ENCODE measurements at regions of chr7 and their contacts with region 1.

Region 1: DNA sequence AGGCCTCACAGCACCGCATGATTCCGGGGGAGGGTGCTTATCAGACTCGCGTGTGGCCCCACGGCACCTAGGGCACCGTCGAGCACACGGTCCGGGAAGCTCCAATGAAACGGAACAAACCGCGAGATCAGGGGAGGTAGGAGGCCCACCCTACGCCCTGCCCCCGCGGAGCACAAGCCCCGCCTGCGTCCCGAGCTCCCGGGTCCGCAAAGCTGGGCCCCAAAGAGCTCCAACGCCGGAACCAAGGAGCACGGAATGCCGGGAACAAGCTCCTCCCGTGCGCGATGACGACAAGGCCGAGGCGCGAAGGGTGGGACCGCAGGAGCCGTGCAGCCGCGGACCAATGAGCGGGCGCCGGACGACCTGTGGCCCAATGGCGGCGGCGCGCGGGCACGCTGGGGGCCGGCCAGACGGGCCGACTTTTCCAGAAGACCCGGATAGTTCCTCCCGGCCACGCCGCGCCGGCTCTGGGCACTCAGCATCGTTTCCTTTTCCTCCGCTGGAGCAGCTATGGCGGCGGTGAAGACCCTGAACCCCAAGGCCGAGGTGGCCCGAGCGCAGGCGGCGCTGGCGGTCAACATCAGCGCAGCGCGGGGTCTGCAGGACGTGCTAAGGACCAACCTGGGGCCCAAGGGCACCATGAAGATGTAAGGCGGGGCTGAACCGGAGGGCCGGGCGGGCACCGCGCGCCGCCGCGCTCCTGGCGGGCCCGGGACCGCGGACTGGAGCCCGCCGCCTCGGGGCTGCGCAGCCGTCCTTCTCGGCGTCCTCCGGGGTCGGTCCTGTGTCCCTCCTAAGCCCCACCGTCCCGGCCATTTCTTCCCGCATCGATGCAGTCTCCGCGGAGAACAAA is at the starts of genes CCT6A and PSPH:
- DNase-seq: peak; percentile 94
- ATAC-seq: peak; percentile 92
- H3K4me3 Mint-ChIP-seq: peak within 1 kb of the TSS; percentile 94
- H3K27ac Mint-ChIP-seq: peak within 1 kb of the TSS; percentile 94
- H3K4me1 Mint-ChIP-seq: peaks cover 46% of the 10 kb centered on the region
- H3K27me3 Mint-ChIP-seq: no peaks in the 10 kb centered on the region
- CTCF ChIP-seq: no peak
- total RNA-seq, gene CCT6A: 231 to 239 TPM
- total RNA-seq, gene PSPH: 31.2 to 33.8 TPM

Region 2: DNA sequence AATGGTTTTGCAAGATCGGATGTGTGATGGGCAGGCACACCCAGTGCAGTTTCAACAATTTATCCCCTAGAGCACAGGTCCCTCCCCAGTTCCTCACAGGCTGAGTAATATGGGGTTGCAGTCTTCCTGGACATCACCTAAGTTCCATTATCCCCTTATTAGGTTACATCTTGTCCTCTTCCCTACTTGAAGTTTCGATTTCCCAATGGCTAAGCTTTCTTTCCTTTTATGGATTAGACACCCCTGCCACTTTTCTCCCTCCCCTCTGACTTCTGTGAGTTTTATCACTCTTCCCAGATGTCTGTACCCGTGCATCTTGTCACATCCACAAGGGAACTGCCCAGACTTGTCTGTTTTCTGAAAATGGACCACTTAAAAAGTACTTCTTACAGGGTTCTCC is 89.6 kb before region 1 on chr7:
- CTCF ChIA-PET with region 1: no interaction called
- POLR2A ChIA-PET with region 1: no interaction called
- intact Hi-C with region 1: no loop called
- DNase-seq: no peak
- ATAC-seq: no peak
- H3K4me3 Mint-ChIP-seq: no peak overlapping the region
- H3K27ac Mint-ChIP-seq: no peak overlapping the region
- H3K4me1 Mint-ChIP-seq: peaks cover 22% of the 10 kb centered on the region
- H3K27me3 Mint-ChIP-seq: no peaks in the 10 kb centered on the region
- CTCF ChIP-seq: no peak

Region 3: DNA sequence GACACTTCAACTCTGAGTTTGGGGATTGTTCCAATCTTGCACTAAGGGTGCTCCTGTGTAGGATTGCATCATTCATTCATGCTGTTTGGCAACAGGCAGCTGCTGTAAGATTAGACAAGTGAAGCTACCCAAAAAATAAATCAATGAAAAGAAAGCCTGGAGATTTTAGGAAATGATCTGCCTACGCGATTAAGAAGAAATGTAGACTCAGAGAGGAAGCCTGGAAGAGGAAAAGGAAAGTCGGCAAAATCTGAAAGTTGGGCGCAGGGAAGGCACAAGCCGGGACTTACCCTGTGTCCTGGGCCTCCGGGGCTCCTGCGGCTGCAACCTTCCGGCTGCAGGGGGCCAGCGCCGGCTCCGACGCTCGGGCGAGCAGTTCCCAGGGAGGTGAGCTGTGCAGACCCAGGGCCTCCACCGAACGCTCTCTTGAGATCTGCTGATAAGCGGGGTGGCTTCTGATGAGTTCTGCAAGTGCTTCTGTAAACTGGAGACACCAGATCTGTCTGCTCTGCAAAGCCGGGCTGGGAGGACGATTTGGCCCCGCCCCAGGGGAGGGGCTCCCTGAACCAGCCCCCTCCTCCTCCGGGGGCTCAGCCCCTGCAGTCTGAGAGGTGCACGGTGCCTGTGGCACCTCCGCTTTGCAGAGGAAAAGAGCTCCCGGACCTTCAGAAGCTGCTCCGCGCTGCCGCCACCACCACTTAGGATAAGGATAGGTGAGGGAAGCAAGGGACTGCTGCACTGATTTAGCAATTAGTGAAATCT is 17.7 kb before region 1 on chr7:
- CTCF ChIA-PET with region 1: no interaction called
- POLR2A ChIA-PET with region 1: interaction called, 12 read pairs
- intact Hi-C with region 1: no loop called
- DNase-seq: peak; percentile 71
- ATAC-seq: peak; percentile 96
- H3K4me3 Mint-ChIP-seq: peak overlapping the region; percentile 79
- H3K27ac Mint-ChIP-seq: peak overlapping the region; percentile 81
- H3K4me1 Mint-ChIP-seq: peaks cover 9% of the 10 kb centered on the region
- H3K27me3 Mint-ChIP-seq: no peaks in the 10 kb centered on the region
- CTCF ChIP-seq: no peak

Region 4: DNA sequence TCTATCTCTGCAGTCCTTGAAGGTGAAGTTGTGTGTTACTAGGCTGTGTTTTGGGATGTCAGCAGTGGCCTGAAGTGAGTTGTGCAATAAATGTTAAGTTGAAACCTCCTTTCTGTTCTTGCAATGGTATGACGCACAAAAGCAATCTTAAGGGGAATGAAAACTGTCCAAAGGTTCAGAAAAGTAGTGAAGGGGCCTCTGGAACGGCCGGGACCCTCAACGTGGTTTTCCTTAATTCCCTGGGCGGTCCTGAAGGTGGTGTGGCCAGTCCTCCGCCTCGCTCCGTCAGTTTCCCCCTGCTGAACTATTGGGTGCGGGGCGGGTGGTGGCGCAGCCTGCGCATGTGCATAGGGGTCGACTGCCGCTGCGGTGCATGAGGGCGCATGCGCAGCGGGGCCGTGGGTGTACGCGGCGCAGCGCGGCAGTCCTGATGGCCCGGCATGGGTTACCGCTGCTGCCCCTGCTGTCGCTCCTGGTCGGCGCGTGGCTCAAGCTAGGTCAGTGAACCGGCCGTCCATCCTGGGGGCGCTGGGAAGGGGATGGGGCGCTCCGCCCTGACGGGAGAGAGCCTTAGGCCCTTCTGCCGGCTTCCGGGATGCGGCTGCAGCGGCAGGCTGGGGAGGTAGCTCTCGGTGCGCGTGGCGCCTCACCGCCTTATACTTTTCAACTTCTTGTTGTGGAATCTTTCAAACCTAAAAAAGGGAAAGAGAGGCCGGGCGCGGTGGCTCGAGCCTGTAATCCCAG is 12.5 kb after region 1 on chr7 and contains the start of gene SUMF2:
- CTCF ChIA-PET with region 1: interaction called, 7 read pairs
- POLR2A ChIA-PET with region 1: interaction called, 18 read pairs
- intact Hi-C with region 1: loop called (anchors 1 kb)
- DNase-seq: peak; percentile 89
- ATAC-seq: peak; percentile 93
- H3K4me3 Mint-ChIP-seq: peak within 1 kb of the TSS; percentile 86
- H3K27ac Mint-ChIP-seq: peak within 1 kb of the TSS; percentile 95
- H3K4me1 Mint-ChIP-seq: peaks cover 40% of the 10 kb centered on the region
- H3K27me3 Mint-ChIP-seq: no peaks in the 10 kb centered on the region
- CTCF ChIP-seq: no peak
- total RNA-seq, gene SUMF2: 140 to 141 TPM

Region 5: GRCh38 chr7:56106108-56107073 is 54.8 kb after region 1 on chr7 and contains the start of gene CHCHD2:
- CTCF ChIA-PET with region 1: interaction called, 3 read pairs
- POLR2A ChIA-PET with region 1: no interaction called
- intact Hi-C with region 1: loop called (anchors 5 kb)
- DNase-seq: peak; percentile 97
- ATAC-seq: peak; percentile 98
- H3K4me3 Mint-ChIP-seq: peak within 1 kb of the TSS; percentile 100
- H3K27ac Mint-ChIP-seq: peak within 1 kb of the TSS; percentile 99
- H3K4me1 Mint-ChIP-seq: peaks cover 29% of the 10 kb centered on the region
- H3K27me3 Mint-ChIP-seq: no peaks in the 10 kb centered on the region
- CTCF ChIP-seq: no peak
- total RNA-seq, gene CHCHD2: 726 to 748 TPM

Measured in activated CD8-positive, alpha-beta T cell treated with anti-CD3 and anti-CD28 coated beads for 36 hours (primary cell).